ENCODE measurements at regions of chr7 and their contacts with region 1.

Region 1: GRCh38 chr7:152709287-152710152 is 33.6 kb upstream of the XRCC2 start:
- DNase-seq: no peak
- ATAC-seq: no peak
- H3K4me3 ChIP-seq: no peak overlapping the region
- H3K27ac ChIP-seq: no peak overlapping the region
- H3K4me1 ChIP-seq: no peaks in the 10 kb centered on the region
- H3K27me3 ChIP-seq: no peaks in the 10 kb centered on the region
- CTCF ChIP-seq: no peak
- EP300 ChIP-seq: no peak
- POLR2A ChIP-seq: no peak
- RAD21 ChIP-seq: no peak

Region 2: DNA sequence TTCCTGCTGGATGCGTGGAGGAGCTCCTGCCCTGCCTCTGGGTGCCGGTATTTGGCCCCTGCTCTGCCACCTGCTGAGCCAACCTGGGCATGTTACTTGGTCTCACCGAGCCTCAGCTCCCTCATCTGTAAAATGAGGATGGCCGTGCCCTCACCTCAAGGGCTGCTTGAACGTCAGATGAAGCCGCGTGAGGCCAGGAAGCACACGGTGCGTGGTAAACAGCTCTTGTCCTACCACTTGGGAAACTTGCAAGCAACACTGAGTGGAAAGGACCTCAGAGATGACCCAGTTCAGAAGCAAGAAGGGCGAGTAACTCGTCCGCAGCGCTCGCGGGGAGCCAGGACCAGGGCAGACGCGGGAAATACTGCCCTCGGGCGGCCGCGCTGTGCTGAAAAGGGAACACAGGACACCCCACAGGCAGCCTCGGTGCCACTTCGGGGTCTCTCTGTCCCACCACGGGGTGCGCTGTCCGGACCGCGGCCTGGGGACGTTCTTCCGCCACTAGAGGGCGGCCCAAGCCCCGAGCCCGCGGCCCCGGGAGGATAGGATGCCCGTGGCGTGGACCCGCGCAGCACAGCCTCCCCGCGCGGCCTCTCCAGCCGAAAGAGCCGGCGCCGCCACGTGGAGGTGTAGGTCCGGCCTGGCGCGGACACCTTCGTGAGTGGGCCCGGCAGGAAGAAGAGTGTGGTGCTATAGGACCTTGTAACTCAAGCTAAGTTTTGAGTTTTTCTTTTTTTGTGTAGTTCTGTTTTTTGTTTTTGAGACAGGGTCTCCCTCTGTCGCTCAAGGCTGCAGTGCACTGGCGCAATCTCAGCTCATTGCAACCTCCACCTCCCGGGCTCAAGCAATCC is 926.7 kb before region 1 on chr7:
- CTCF ChIA-PET with region 1: interaction called, 13 read pairs
- POLR2A ChIA-PET with region 1: no interaction called
- RAD21 ChIA-PET with region 1: no interaction called
- SMC1A ChIA-PET with region 1: no interaction called
- in situ Hi-C with region 1: no loop called
- intact Hi-C with region 1: no loop called
- DNase-seq: no peak
- ATAC-seq: peak; percentile 99
- H3K4me3 ChIP-seq: no peak overlapping the region
- H3K27ac ChIP-seq: no peak overlapping the region
- H3K4me1 ChIP-seq: no peaks in the 10 kb centered on the region
- H3K27me3 ChIP-seq: no peaks in the 10 kb centered on the region; a peak in 1 of 4 replicates
- CTCF ChIP-seq: peak; percentile 80 to 94 (median 92)
- EP300 ChIP-seq: no peak
- POLR2A ChIP-seq: no peak
- RAD21 ChIP-seq: peak; percentile 42

Region 3: GRCh38 chr7:152158801-152159587 is 550.5 kb before region 1 on chr7:
- CTCF ChIA-PET with region 1: interaction called, 8 read pairs
- POLR2A ChIA-PET with region 1: no interaction called
- RAD21 ChIA-PET with region 1: interaction called, 14 read pairs
- SMC1A ChIA-PET with region 1: interaction called, 33 read pairs
- in situ Hi-C with region 1: no loop called
- intact Hi-C with region 1: no loop called
- DNase-seq: peak; percentile 95
- ATAC-seq: peak; percentile 94
- H3K4me3 ChIP-seq: peak overlapping the region; percentile 4
- H3K27ac ChIP-seq: peak overlapping the region; percentile 80
- H3K4me1 ChIP-seq: peaks cover 27% of the 10 kb centered on the region
- H3K27me3 ChIP-seq: no peaks in the 10 kb centered on the region
- CTCF ChIP-seq: no peak
- EP300 ChIP-seq: peak; percentile 85 to 94; a peak in 3 of 4 replicates
- POLR2A ChIP-seq: no peak
- RAD21 ChIP-seq: peak; percentile 12; the same call in 1 of the 2 replicates

Region 4: DNA sequence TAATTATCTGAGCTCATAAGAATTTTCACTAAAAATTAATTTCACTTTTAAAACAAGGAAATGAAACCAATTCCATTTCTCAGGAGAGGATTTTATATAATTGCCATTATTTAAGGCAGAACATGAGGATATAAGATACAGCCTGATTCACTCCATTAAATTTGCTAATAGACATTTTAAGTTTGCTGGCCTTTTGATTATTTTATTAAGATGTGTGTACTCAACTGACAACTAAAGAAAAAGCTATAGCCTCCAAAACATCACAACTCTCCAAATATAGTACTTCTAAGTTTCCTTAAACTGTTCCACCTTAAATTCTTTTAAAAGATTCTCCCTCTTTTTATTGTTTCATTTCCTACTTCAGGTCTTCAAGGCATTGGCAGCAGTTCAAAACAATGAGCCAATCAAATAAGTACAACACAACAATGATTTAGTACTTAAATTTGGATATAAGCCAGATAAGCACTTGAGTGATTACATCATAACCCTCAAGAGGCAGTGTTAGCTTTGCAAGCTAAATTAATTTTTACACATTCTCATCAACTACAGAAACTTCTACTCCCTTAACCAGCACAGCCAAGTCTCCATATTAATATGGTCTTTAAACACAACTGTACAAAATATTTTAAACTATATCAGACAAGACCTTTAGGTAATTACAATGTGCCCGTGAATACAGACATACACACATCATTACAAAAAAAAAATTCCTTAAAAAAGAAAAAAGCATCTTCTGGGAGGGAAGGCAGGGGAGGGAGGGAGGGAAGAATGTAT is 395.5 kb before region 1 on chr7:
- CTCF ChIA-PET with region 1: interaction called, 4 read pairs
- POLR2A ChIA-PET with region 1: interaction called, 3 read pairs
- RAD21 ChIA-PET with region 1: interaction called, 18 read pairs
- SMC1A ChIA-PET with region 1: interaction called, 8 read pairs
- in situ Hi-C with region 1: no loop called
- intact Hi-C with region 1: no loop called
- DNase-seq: no peak
- ATAC-seq: peak; percentile 60
- H3K4me3 ChIP-seq: no peak overlapping the region
- H3K27ac ChIP-seq: no peak overlapping the region
- H3K4me1 ChIP-seq: peaks cover 12% of the 10 kb centered on the region; the same call in 1 of the 2 replicates
- H3K27me3 ChIP-seq: no peaks in the 10 kb centered on the region
- CTCF ChIP-seq: no peak
- EP300 ChIP-seq: no peak
- POLR2A ChIP-seq: no peak
- RAD21 ChIP-seq: no peak

Region 5: GRCh38 chr7:152336754-152337368 is 372.7 kb before region 1 on chr7:
- CTCF ChIA-PET with region 1: interaction called, 48 read pairs
- POLR2A ChIA-PET with region 1: no interaction called
- RAD21 ChIA-PET with region 1: interaction called, 51 read pairs
- SMC1A ChIA-PET with region 1: interaction called, 67 read pairs
- in situ Hi-C with region 1: loop called (anchors 5 kb)
- intact Hi-C with region 1: loop called (anchors 1 kb)
- DNase-seq: no peak
- ATAC-seq: peak; percentile 90
- H3K4me3 ChIP-seq: peak overlapping the region; percentile 8; the same call in 1 of the 2 replicates
- H3K27ac ChIP-seq: no peak overlapping the region
- H3K4me1 ChIP-seq: peaks cover 31% of the 10 kb centered on the region; the same call in 1 of the 2 replicates
- H3K27me3 ChIP-seq: no peaks in the 10 kb centered on the region
- CTCF ChIP-seq: peak; percentile 51 to 57 (median 57); a peak in 5 of 6 replicates
- EP300 ChIP-seq: no peak
- POLR2A ChIP-seq: no peak
- RAD21 ChIP-seq: peak; percentile 67

Region 6: GRCh38 chr7:152574892-152575640 is 134.5 kb before region 1 on chr7:
- CTCF ChIA-PET with region 1: interaction called, 14 read pairs
- POLR2A ChIA-PET with region 1: no interaction called
- RAD21 ChIA-PET with region 1: interaction called, 14 read pairs
- SMC1A ChIA-PET with region 1: interaction called, 4 read pairs
- in situ Hi-C with region 1: no loop called
- intact Hi-C with region 1: loop called (anchors 2 kb)
- DNase-seq: peak; percentile 56
- ATAC-seq: peak; percentile 96
- H3K4me3 ChIP-seq: 0 out of 2 replicates have a peak overlapping the region, but pooled peaks have one; percentile 5
- H3K27ac ChIP-seq: peak overlapping the region; percentile 35
- H3K4me1 ChIP-seq: no peaks in the 10 kb centered on the region; the same call in 1 of the 2 replicates
- H3K27me3 ChIP-seq: no peaks in the 10 kb centered on the region
- CTCF ChIP-seq: no peak
- EP300 ChIP-seq: peak in 1 of 2 experiments; percentile 62; a peak in 2 of 4 replicates
- POLR2A ChIP-seq: no peak
- RAD21 ChIP-seq: no peak

Region 7: DNA sequence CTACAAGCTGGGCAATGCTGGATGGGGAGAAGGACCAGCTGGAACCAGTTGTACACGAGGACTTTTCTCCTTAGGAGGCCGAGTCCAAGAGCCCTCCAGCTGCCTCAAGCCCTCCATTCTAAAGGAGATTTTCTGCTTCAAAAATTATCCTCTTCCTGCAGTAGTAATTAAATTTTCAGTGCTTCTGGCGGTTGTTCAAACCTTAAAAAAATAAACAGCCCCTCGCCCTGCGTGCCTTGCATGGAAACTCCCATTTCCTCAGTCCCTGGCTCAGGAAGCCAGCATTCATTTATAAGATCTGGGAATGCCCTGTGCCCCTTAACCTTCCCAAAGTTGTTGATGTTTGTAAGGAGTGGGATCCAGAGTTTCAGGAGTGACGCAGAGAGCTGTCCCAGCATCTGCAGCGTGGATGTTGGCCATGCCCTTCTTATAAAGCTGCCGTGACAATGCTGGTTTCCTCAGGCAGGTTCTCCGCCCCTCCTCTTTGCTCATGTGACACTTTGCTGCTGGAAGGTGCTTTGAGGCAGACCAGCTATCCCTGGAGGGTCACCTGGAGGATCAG is 26.0 kb after region 1 on chr7:
- CTCF ChIA-PET with region 1: no interaction called
- POLR2A ChIA-PET with region 1: no interaction called
- RAD21 ChIA-PET with region 1: no interaction called
- SMC1A ChIA-PET with region 1: no interaction called
- in situ Hi-C with region 1: no loop called
- intact Hi-C with region 1: no loop called
- DNase-seq: no peak
- ATAC-seq: no peak
- H3K4me3 ChIP-seq: no peak overlapping the region
- H3K27ac ChIP-seq: no peak overlapping the region
- H3K4me1 ChIP-seq: no peaks in the 10 kb centered on the region
- H3K27me3 ChIP-seq: no peaks in the 10 kb centered on the region; a peak in 1 of 4 replicates
- CTCF ChIP-seq: no peak
- EP300 ChIP-seq: no peak
- POLR2A ChIP-seq: no peak
- RAD21 ChIP-seq: no peak

Region 8: DNA sequence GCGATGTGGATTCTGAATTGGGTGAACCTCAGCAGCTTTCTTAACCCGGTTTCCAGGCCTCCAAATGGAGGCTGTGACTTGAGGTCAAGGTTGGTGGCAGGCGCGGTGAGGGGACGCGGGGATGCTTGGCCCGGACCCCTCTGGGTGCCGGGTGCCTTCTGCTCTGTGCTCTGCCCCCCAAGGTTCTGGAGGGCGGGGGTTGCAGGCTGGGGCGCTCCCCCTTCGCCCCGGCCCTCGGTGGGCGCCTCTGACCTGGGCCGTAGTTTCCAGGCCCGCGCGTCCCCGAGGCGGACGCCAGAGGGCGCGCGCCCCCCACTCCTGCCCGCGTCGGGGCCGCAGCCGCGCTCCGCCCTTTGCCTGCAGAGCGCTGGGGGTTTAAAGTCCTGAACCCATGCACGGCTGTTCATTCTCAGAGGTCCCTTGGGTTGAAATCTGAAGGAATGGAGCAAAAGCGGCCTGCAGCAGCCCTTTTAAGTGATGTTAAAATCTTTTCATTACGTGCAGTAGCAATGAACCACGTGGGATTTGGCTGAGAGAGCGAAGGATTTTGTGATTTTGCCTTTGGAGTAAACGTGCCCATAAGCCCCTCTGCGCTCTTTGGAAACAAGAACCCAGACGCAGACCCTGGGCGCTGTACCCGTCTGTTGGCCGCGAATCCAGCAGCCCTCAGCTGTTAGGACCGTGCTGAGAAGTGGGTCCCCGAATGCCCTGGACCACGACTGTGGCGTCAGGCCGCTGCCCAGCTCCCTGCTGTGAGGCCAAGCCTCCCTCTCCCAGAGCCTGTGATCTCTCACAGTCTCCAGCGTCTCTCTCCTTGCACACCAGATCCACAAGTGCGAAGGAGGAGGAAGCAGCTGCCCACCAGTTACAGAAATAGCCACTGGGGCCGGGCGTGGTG is 185.0 kb after region 1 on chr7:
- CTCF ChIA-PET with region 1: no interaction called
- POLR2A ChIA-PET with region 1: no interaction called
- RAD21 ChIA-PET with region 1: no interaction called
- SMC1A ChIA-PET with region 1: no interaction called
- in situ Hi-C with region 1: no loop called
- intact Hi-C with region 1: no loop called
- DNase-seq: no peak
- ATAC-seq: peak; percentile 96
- H3K4me3 ChIP-seq: no peak overlapping the region
- H3K27ac ChIP-seq: no peak overlapping the region
- H3K4me1 ChIP-seq: no peaks in the 10 kb centered on the region
- H3K27me3 ChIP-seq: no peaks in the 10 kb centered on the region; a peak in 1 of 4 replicates
- CTCF ChIP-seq: peak; percentile 66 to 70 (median 68)
- EP300 ChIP-seq: no peak
- POLR2A ChIP-seq: no peak
- RAD21 ChIP-seq: peak; percentile 64

Region 9: GRCh38 chr7:153245809-153246208 is 536.3 kb after region 1 on chr7:
- CTCF ChIA-PET with region 1: no interaction called
- POLR2A ChIA-PET with region 1: no interaction called
- RAD21 ChIA-PET with region 1: no interaction called
- SMC1A ChIA-PET with region 1: no interaction called
- in situ Hi-C with region 1: no loop called
- intact Hi-C with region 1: no loop called
- DNase-seq: no peak
- ATAC-seq: no peak
- H3K4me3 ChIP-seq: no peak overlapping the region
- H3K27ac ChIP-seq: no peak overlapping the region
- H3K4me1 ChIP-seq: no peaks in the 10 kb centered on the region
- H3K27me3 ChIP-seq: no peaks in the 10 kb centered on the region
- CTCF ChIP-seq: no peak
- EP300 ChIP-seq: no peak
- POLR2A ChIP-seq: no peak
- RAD21 ChIP-seq: no peak

Measured in GM12878 (cell line).